ENCODE measurements at regions of chr5 and their contacts with region 1.

Region 1: GRCh38 chr5:69093771-69094482 is at the start of gene SLC30A5:
- DNase-seq: peak; percentile 99
- ATAC-seq: peak; percentile 100
- H3K4me3 Mint-ChIP-seq: peak within 1 kb of the TSS; percentile 90
- H3K27ac Mint-ChIP-seq: peak within 1 kb of the TSS; percentile 91
- H3K4me1 Mint-ChIP-seq: peaks cover 23% of the 10 kb centered on the region
- H3K27me3 Mint-ChIP-seq: no peaks in the 10 kb centered on the region
- CTCF ChIP-seq: peak; percentile 70
- total RNA-seq, gene SLC30A5: 33.0 to 40.1 TPM

Region 2: DNA sequence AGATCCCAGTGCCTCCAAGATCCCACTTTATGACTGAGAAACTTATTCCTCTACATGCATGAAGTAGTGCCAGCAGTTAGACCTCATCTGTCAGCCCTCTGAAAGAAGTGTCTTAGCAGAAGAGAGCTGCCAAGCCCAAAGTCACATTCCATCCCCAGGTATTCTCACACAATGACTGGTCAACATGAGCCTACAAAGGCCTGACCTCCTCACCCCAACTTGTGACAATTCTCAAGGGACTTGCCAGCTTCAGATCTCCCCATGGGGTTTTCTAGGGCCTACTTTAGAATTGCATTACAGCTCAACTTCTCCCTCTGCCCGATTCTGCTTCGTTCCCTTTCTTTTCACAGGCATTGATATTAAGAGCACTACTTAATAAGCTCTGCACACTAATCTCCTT is 394.0 kb before region 1 on chr5:
- CTCF ChIA-PET with region 1: no interaction called
- POLR2A ChIA-PET with region 1: no interaction called
- intact Hi-C with region 1: no loop called
- DNase-seq: no peak
- ATAC-seq: no peak
- H3K4me3 Mint-ChIP-seq: no peak overlapping the region
- H3K27ac Mint-ChIP-seq: no peak overlapping the region
- H3K4me1 Mint-ChIP-seq: no peaks in the 10 kb centered on the region
- H3K27me3 Mint-ChIP-seq: no peaks in the 10 kb centered on the region
- CTCF ChIP-seq: no peak

Region 3: GRCh38 chr5:68911840-68912690 is 181.9 kb before region 1 on chr5:
- CTCF ChIA-PET with region 1: no interaction called
- POLR2A ChIA-PET with region 1: no interaction called
- intact Hi-C with region 1: no loop called
- DNase-seq: no peak
- ATAC-seq: no peak
- H3K4me3 Mint-ChIP-seq: no peak overlapping the region
- H3K27ac Mint-ChIP-seq: no peak overlapping the region
- H3K4me1 Mint-ChIP-seq: peaks cover 2% of the 10 kb centered on the region
- H3K27me3 Mint-ChIP-seq: no peaks in the 10 kb centered on the region
- CTCF ChIP-seq: no peak

Region 4: GRCh38 chr5:68983959-68984358 is 110.0 kb before region 1 on chr5:
- CTCF ChIA-PET with region 1: no interaction called
- POLR2A ChIA-PET with region 1: no interaction called
- intact Hi-C with region 1: no loop called
- DNase-seq: no peak
- ATAC-seq: no peak
- H3K4me3 Mint-ChIP-seq: no peak overlapping the region
- H3K27ac Mint-ChIP-seq: no peak overlapping the region
- H3K4me1 Mint-ChIP-seq: no peaks in the 10 kb centered on the region
- H3K27me3 Mint-ChIP-seq: peaks cover 2% of the 10 kb centered on the region
- CTCF ChIP-seq: no peak

Region 5: DNA sequence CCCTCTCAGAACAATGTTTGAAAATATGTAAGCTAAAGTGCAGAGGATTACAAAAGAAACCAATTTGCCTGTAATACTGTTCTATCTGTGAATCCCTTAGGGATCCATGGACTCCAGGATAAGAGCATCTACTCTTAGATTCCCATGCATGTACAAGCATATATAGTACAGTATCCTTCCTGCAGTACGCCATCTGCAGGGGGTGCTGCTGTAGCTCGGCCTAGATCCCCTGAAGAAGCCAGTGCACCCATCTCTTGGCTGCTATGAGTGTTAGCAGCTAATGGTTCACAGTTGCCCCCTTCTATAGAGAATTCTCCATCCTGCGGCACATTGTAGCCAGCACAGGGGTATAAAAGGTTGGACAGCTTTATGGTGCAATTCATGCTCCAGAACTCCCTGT is 61.9 kb before region 1 on chr5:
- CTCF ChIA-PET with region 1: no interaction called
- POLR2A ChIA-PET with region 1: no interaction called
- intact Hi-C with region 1: no loop called
- DNase-seq: peak; percentile 11
- ATAC-seq: no peak
- H3K4me3 Mint-ChIP-seq: no peak overlapping the region
- H3K27ac Mint-ChIP-seq: no peak overlapping the region
- H3K4me1 Mint-ChIP-seq: no peaks in the 10 kb centered on the region
- H3K27me3 Mint-ChIP-seq: peaks cover 2% of the 10 kb centered on the region
- CTCF ChIP-seq: no peak

Region 6: GRCh38 chr5:69042915-69043658 is 50.8 kb before region 1 on chr5:
- CTCF ChIA-PET with region 1: interaction called, 16 read pairs
- POLR2A ChIA-PET with region 1: interaction called, 4 read pairs
- intact Hi-C with region 1: loop called (anchors 1 kb)
- DNase-seq: peak; percentile 83
- ATAC-seq: peak; percentile 95
- H3K4me3 Mint-ChIP-seq: peak overlapping the region; percentile 84
- H3K27ac Mint-ChIP-seq: peak overlapping the region; percentile 96
- H3K4me1 Mint-ChIP-seq: peaks cover 14% of the 10 kb centered on the region
- H3K27me3 Mint-ChIP-seq: no peaks in the 10 kb centered on the region
- CTCF ChIP-seq: peak; percentile 77

Region 7: DNA sequence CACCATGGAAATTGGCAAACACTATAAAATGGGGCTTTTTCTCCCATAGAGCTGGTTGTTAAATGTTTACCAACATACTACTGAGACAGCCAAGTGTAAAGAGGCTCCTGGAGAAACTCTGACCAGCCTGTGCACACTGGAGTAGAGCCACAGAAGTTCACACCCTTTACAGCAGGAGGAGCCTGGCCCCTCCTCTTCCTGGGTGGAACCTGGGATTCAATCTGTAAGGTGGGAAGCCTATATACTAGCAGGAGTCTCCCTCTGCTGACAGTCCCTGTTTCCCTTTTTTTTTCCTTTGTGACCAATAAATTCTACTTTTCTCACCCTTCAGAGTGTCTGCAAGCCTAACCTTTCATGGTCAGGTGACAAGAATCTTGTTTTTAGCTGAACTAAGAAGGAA is 10.5 kb before region 1 on chr5:
- CTCF ChIA-PET with region 1: interaction called, 39 read pairs
- POLR2A ChIA-PET with region 1: interaction called, 7 read pairs
- intact Hi-C with region 1: no loop called
- DNase-seq: no peak
- ATAC-seq: no peak
- H3K4me3 Mint-ChIP-seq: no peak overlapping the region
- H3K27ac Mint-ChIP-seq: no peak overlapping the region
- H3K4me1 Mint-ChIP-seq: peaks cover 11% of the 10 kb centered on the region
- H3K27me3 Mint-ChIP-seq: no peaks in the 10 kb centered on the region
- CTCF ChIP-seq: no peak

Region 8: DNA sequence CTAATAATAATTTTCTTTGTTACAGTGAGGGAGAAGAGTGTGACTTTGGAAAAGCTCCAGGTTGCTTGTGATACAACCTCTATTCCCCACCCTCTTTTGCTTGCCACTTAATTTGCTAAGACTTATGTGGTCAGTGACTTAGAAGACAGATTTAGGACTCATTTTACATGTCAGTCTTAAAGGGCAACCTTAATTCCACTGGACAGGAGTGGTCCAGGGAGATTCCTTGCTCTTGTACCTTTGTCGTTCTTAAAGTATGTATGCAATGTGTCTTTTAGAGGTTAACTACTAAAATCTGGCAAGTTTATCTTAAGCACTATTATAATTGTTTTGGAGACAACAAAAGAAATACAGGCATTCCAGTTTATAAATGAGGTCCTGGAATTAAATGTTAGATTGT is 19.9 kb after region 1 on chr5:
- CTCF ChIA-PET with region 1: interaction called, 10 read pairs
- POLR2A ChIA-PET with region 1: no interaction called
- intact Hi-C with region 1: no loop called
- DNase-seq: no peak
- ATAC-seq: no peak
- H3K4me3 Mint-ChIP-seq: no peak overlapping the region
- H3K27ac Mint-ChIP-seq: no peak overlapping the region
- H3K4me1 Mint-ChIP-seq: no peaks in the 10 kb centered on the region
- H3K27me3 Mint-ChIP-seq: no peaks in the 10 kb centered on the region
- CTCF ChIP-seq: no peak

Region 9: GRCh38 chr5:69189162-69190086 is 95.5 kb after region 1 on chr5 and contains the start of gene CENPH:
- CTCF ChIA-PET with region 1: interaction called, 21 read pairs
- POLR2A ChIA-PET with region 1: interaction called, 4 read pairs
- intact Hi-C with region 1: no loop called
- DNase-seq: peak; percentile 94
- ATAC-seq: peak; percentile 91
- H3K4me3 Mint-ChIP-seq: peak within 1 kb of the TSS; percentile 98
- H3K27ac Mint-ChIP-seq: peak within 1 kb of the TSS; percentile 98
- H3K4me1 Mint-ChIP-seq: peaks cover 12% of the 10 kb centered on the region
- H3K27me3 Mint-ChIP-seq: no peaks in the 10 kb centered on the region
- CTCF ChIP-seq: no peak
- total RNA-seq, gene CENPH: 97.0 to 98.6 TPM

Region 10: DNA sequence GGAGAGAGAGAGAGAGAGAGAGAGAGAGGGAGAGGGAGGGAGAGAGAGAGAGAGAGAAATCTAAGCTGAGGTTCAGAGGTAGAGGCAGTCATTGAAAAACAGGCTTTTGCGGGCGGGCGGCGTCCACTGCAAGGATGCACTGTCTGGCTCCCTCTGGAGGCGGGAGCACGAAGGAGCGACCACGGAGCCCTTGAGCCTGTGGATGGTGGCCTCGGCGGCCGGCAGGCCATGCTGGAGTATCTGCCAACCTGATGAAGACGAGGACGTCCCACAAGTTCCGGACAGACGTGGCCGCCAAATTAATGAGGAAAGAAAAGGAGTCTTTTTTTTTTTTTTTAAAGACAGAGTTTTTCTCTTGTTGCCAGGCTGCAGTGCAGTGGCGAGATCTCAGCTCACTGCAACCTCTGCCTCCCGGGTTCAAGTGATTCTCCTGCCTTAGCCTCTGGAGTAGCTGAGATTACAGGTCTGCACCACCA is 240.9 kb after region 1 on chr5:
- CTCF ChIA-PET with region 1: interaction called, 16 read pairs
- POLR2A ChIA-PET with region 1: interaction called, 3 read pairs
- intact Hi-C with region 1: loop called (anchors 10 kb)
- DNase-seq: peak; percentile 90
- ATAC-seq: peak; percentile 85
- H3K4me3 Mint-ChIP-seq: no peak overlapping the region
- H3K27ac Mint-ChIP-seq: peak overlapping the region; percentile 22
- H3K4me1 Mint-ChIP-seq: peaks cover 12% of the 10 kb centered on the region
- H3K27me3 Mint-ChIP-seq: no peaks in the 10 kb centered on the region
- CTCF ChIP-seq: peak; percentile 71

Region 11: DNA sequence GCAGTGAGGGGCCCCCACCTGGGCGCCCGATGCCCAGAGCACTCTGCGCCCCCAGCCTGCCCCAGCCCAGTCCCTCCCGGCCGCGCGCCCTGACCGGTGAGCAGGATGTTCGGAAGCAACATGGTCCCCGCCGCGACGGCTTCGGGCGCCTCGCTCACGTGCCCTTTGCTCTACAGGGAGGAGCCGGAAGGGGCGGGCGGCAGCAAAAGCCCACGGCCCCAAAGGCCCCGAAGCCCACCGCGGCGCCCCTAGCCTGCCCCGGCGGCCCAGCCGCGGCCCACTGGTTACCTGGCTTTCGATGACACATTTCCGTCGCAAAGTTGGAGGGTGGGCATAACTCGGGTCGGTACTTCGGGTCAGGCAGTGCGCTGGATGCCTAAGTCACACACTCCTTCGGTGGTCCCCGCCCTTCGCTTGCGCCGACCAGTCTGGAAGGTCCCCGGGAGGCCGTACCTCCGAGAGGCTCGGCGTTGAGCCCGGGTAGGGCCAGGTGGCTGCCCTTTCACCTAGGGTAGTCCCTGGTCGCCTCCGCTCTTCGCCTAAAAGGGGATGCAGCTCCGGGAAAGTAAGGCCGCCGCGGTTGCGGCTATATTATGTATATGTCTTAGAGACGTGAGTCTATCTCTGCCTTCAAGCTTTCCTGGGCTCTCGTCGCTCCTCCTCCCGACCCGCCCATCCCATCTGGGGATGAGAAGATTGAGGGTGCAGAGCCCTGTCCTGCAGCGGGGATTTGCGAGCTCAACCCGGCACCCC is 275.6 kb after region 1 on chr5 and contains the starts of genes AK6, RAD17 and TAF9:
- CTCF ChIA-PET with region 1: interaction called, 7 read pairs
- POLR2A ChIA-PET with region 1: no interaction called
- intact Hi-C with region 1: loop called (anchors 10 kb)
- DNase-seq: peak; percentile 97
- ATAC-seq: peak; percentile 95
- H3K4me3 Mint-ChIP-seq: peak within 1 kb of the TSS; percentile 89
- H3K27ac Mint-ChIP-seq: peak within 1 kb of the TSS; percentile 100
- H3K4me1 Mint-ChIP-seq: peaks cover 40% of the 10 kb centered on the region
- H3K27me3 Mint-ChIP-seq: no peaks in the 10 kb centered on the region
- CTCF ChIP-seq: no peak
- total RNA-seq, gene AK6: 95.7 to 107 TPM
- total RNA-seq, gene RAD17: 22.9 to 26.5 TPM
- total RNA-seq, gene TAF9: 68.8 to 70.6 TPM